ENCODE measurements at regions of chr7 and their contacts with region 1.

Region 1: DNA sequence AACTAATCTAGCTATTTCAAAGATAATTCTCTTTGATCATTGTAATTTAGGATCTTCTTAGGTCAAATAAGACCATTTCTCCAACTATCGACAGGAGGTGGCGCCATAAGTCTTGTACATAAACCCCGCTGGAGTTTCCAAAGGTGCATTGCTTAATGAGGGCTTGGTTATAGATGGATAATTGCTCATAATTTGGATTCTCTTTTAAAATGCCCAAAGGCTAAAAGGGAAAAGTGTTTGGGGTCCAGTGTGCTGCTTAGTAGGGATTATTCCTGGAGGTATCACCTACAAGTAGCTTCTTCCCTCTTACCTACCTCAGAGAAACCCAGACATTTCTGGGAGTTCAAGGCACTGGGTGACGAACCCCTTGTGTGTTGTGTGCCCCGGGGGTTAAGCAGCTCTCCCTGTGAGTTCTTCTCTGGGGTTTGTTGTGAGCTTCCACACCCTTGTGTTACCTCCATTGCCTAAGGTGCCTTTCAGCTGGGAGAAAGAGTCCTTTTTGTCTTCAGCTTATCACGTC is 75.2 kb downstream of the PAXIP1 start:
- DNase-seq: peak; percentile 60 to 91
- ATAC-seq: peak; percentile 55 to 62 (median 61)
- H3K4me3 ChIP-seq: peak overlapping the region; percentile 55
- H3K4me3 Mint-ChIP-seq: peak overlapping the region; percentile 99
- H3K27ac ChIP-seq: peak overlapping the region; percentile 89
- H3K27ac Mint-ChIP-seq: peak overlapping the region; percentile 99
- H3K4me1 ChIP-seq: peaks cover 13% of the 10 kb centered on the region
- H3K4me1 Mint-ChIP-seq: peaks cover 24 to 33% of the 10 kb centered on the region in 2 donors
- H3K27me3 ChIP-seq: no peaks in the 10 kb centered on the region
- H3K27me3 Mint-ChIP-seq: peaks cover 0 to 5% of the 10 kb centered on the region in 2 donors
- CTCF ChIP-seq: peak; percentile 79

Region 2: GRCh38 chr7:154953006-154953684 is 25.5 kb after region 1 on chr7:
- intact Hi-C with region 1: loop called (anchors 1 kb)
- DNase-seq: peak; percentile 39 to 83
- ATAC-seq: peak in 2 of 3 donors; percentile 50 to 61
- H3K4me3 ChIP-seq: no peak overlapping the region
- H3K4me3 Mint-ChIP-seq: no peak overlapping the region
- H3K27ac ChIP-seq: no peak overlapping the region
- H3K27ac Mint-ChIP-seq: no peak overlapping the region
- H3K4me1 ChIP-seq: no peaks in the 10 kb centered on the region
- H3K4me1 Mint-ChIP-seq: no peaks in the 10 kb centered on the region
- H3K27me3 ChIP-seq: no peaks in the 10 kb centered on the region
- H3K27me3 Mint-ChIP-seq: no peaks in the 10 kb centered on the region
- CTCF ChIP-seq: peak; percentile 62

Region 3: DNA sequence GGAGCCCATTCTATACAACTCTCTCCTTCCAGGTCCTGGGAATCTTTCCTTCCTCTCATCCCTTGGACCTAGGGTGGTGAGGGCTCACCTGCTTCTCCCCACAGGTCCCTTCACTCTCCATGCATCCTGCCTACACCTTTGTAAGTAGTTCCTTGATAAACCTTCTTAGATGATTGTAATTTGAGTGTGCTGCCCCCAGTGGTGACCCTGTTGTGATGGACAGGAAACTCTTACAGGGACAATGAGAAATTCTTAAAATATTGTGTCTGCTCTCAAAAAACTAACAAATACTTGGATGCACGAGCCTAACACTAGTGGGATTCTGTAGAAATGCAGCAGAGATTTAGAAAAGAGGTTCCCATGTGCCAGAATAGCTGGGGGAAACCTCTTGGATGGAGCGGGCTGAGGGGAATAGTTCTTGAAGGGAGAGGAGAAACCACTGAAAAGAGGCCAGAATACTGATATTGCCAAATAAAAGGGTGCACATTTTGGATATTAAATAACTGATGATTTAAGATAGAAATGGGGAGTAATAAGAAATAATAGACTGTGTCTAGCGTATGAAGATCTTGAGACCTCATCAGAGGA is 82.0 kb after region 1 on chr7:
- intact Hi-C with region 1: loop called (anchors 2 kb)
- DNase-seq: peak in 1 of 2 donors; percentile 54
- ATAC-seq: peak in 1 of 3 donors; percentile 59
- H3K4me3 ChIP-seq: no peak overlapping the region
- H3K4me3 Mint-ChIP-seq: no peak overlapping the region
- H3K27ac ChIP-seq: no peak overlapping the region
- H3K27ac Mint-ChIP-seq: no peak overlapping the region
- H3K4me1 ChIP-seq: no peaks in the 10 kb centered on the region
- H3K4me1 Mint-ChIP-seq: peaks cover 5% of the 10 kb centered on the region in 2 donors
- H3K27me3 ChIP-seq: no peaks in the 10 kb centered on the region
- H3K27me3 Mint-ChIP-seq: no peaks in the 10 kb centered on the region
- CTCF ChIP-seq: peak; percentile 33

Region 4: DNA sequence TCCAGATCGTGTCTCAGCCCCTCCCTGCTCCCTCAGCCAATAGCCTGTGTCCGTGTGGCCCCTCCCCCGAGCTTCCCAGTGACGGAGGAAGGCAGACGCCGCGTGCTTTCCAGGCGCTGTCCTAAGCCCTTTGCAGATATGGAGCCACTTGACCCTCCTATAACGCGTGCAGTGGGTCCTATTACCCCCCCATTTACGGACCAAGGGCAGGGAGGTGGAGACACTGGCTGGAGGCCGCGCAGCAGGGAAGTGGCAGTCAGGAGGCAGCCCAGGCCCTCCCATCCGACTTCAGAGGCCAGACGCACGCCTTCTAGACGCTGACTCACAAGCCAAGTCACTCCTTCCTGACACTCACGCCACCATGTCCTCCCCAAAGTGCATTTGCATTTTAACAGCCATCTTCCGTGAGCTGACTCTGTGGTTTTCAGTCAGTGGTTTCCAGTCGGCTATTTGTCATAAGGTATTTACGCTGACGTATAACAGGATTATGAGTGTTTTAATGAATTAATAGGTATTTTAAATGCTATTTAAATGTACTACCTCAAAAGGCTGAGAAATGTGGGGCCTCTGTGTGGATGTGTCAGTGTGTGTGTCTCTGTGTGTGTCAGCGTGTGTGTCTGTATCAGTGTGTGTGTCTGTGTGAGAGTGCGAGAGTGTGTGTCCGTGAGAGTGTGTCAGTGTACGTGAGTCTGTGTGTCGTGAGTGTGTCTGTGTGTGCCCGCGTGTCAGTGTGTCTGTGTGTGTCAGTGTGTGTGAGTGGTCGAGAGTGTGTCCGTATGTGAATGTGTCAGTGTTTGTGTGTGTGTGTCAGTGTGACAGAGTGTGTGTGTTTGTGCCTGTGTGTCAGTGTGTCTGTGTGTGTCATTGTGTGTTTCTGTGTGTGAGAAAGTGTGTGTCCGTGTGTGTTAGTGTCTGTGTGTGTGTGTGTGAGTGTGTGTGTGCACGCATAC is 278.0 kb after region 1 on chr7:
- intact Hi-C with region 1: loop called (anchors 1 kb)
- DNase-seq: peak; percentile 83 to 96
- ATAC-seq: peak; percentile 82 to 93 (median 88)
- H3K4me3 ChIP-seq: peak overlapping the region; percentile 37
- H3K4me3 Mint-ChIP-seq: peak overlapping the region; percentile 96
- H3K27ac ChIP-seq: peak overlapping the region; percentile 93
- H3K27ac Mint-ChIP-seq: peak overlapping the region; percentile 96 to 98
- H3K4me1 ChIP-seq: peaks cover 25% of the 10 kb centered on the region
- H3K4me1 Mint-ChIP-seq: peaks cover 21 to 35% of the 10 kb centered on the region in 2 donors
- H3K27me3 ChIP-seq: no peaks in the 10 kb centered on the region
- H3K27me3 Mint-ChIP-seq: peaks cover 0 to 4% of the 10 kb centered on the region in 2 donors
- CTCF ChIP-seq: no peak

Region 5: GRCh38 chr7:155344600-155345433 is 417.1 kb after region 1 on chr7:
- intact Hi-C with region 1: loop called (anchors 1 kb)
- DNase-seq: peak; percentile 84 to 88
- ATAC-seq: peak; percentile 96 to 99 (median 98)
- H3K4me3 ChIP-seq: peak overlapping the region; percentile 35
- H3K4me3 Mint-ChIP-seq: peak overlapping the region; percentile 56
- H3K27ac ChIP-seq: no peak overlapping the region
- H3K27ac Mint-ChIP-seq: no peak overlapping the region
- H3K4me1 ChIP-seq: peaks cover 10% of the 10 kb centered on the region
- H3K4me1 Mint-ChIP-seq: peaks cover 5 to 12% of the 10 kb centered on the region in 2 donors
- H3K27me3 ChIP-seq: peaks cover 3% of the 10 kb centered on the region
- H3K27me3 Mint-ChIP-seq: peaks cover 11 to 14% of the 10 kb centered on the region in 2 donors
- CTCF ChIP-seq: peak; percentile 82

Measured in natural killer cell (primary cell).